Caco-2 (cell line): ENCODE measurements at regions of chr15 and their contacts with region 1.

Region 1: DNA sequence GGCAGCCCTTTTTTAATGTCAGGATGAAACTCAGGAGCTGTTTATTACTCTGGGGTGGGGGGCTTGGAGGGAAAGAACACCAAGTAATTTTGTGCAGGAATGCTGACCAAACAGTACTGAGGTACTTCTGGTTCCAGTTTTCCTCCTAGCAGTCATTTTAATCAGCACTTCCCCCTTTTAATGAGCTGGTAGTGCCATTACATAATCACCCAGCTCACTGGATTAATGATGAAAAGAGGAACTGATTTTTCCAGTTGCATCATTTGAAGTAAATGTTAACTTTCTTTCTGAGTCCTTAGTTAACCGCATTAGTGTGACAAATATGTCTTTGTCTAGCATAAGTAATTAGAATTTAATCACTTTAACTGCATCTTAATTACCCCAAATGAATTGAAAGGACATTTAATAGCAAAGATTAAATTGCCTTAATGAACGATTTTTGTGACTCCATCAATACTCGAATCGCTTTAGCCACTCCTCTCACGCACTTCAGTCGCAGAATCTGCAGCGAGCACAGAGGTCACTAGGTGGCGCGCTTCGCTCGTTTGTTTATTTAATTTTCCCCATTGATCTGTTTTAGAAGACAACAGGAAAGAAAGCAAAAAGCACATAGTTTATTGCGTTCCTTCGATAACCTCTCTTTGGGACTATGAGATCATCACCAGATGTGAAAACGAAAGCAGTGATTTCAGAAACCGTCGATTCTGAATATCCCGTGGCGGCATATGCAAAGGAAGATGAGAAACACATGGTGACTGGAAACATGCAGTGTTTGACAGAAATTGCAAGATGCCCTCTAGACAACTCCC is 9.8 kb downstream of the ONECUT1 start:
- DNase-seq: peak in 1 of 2 experiments; percentile 65
- H3K4me3 ChIP-seq: no peak overlapping the region
- H3K4me3 Mint-ChIP-seq: no peak overlapping the region
- H3K27ac Mint-ChIP-seq: no peak overlapping the region
- H3K4me1 ChIP-seq: no peaks in the 10 kb centered on the region
- H3K4me1 Mint-ChIP-seq: no peaks in the 10 kb centered on the region
- H3K27me3 ChIP-seq: no peaks in the 10 kb centered on the region
- H3K27me3 Mint-ChIP-seq: peaks cover 9% of the 10 kb centered on the region
- CTCF ChIP-seq: peak; percentile 84 to 91

Region 2: GRCh38 chr15:52679232-52680040 is 100.9 kb before region 1 on chr15 and contains the start of gene ATOSA:
- CTCF ChIA-PET with region 1: no interaction called
- POLR2A ChIA-PET with region 1: no interaction called
- intact Hi-C with region 1: no loop called
- DNase-seq: peak; percentile 88 to 94
- H3K4me3 ChIP-seq: peak within 1 kb of the TSS; percentile 92
- H3K4me3 Mint-ChIP-seq: peak within 1 kb of the TSS; percentile 92
- H3K27ac Mint-ChIP-seq: peak within 1 kb of the TSS; percentile 89
- H3K4me1 ChIP-seq: peaks cover 9% of the 10 kb centered on the region
- H3K4me1 Mint-ChIP-seq: no peaks in the 10 kb centered on the region
- H3K27me3 ChIP-seq: no peaks in the 10 kb centered on the region
- H3K27me3 Mint-ChIP-seq: peaks cover 5% of the 10 kb centered on the region
- CTCF ChIP-seq: peak in 1 of 2 experiments; percentile 18
- total RNA-seq, gene ATOSA: 17.6 and 18.4 TPM in 2 replicates

Region 3: GRCh38 chr15:52879904-52880303 is 99.5 kb after region 1 on chr15:
- CTCF ChIA-PET with region 1: no interaction called
- POLR2A ChIA-PET with region 1: no interaction called
- intact Hi-C with region 1: loop called (anchors 10 kb)
- DNase-seq: no peak
- H3K4me3 ChIP-seq: no peak overlapping the region
- H3K4me3 Mint-ChIP-seq: no peak overlapping the region
- H3K27ac Mint-ChIP-seq: no peak overlapping the region
- H3K4me1 ChIP-seq: no peaks in the 10 kb centered on the region
- H3K4me1 Mint-ChIP-seq: no peaks in the 10 kb centered on the region
- H3K27me3 ChIP-seq: no peaks in the 10 kb centered on the region; the same call in 1 of the 2 replicates
- H3K27me3 Mint-ChIP-seq: peaks cover 10% of the 10 kb centered on the region
- CTCF ChIP-seq: no peak

Region 4: DNA sequence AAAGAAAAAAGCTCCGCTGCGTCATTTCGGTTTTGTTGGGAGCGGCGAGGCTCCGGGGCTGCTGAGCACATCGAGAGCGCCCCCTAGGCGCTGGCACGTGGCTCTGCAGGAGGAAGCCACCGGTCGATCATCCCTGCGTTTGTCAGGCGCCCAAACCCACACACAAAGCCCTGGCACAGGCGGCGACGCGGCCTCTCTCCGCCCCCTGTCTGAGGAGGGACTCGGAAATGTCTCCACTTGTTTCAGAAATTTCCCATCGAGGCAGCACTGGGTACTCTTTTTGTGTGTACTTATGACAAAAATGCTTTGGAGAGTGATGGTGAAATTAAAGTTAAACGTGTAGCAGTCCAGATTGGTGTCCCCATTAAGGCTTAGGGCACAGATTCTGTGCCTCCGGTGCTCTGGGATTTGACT is 417.1 kb after region 1 on chr15:
- CTCF ChIA-PET with region 1: interaction called, 3 read pairs
- POLR2A ChIA-PET with region 1: no interaction called
- intact Hi-C with region 1: loop called (anchors 2 kb)
- DNase-seq: peak; percentile 41 to 60
- H3K4me3 ChIP-seq: no peak overlapping the region
- H3K4me3 Mint-ChIP-seq: no peak overlapping the region
- H3K27ac Mint-ChIP-seq: no peak overlapping the region
- H3K4me1 ChIP-seq: no peaks in the 10 kb centered on the region
- H3K4me1 Mint-ChIP-seq: no peaks in the 10 kb centered on the region
- H3K27me3 ChIP-seq: no peaks in the 10 kb centered on the region
- H3K27me3 Mint-ChIP-seq: peaks cover 10% of the 10 kb centered on the region
- CTCF ChIP-seq: peak; percentile 89

Region 5: DNA sequence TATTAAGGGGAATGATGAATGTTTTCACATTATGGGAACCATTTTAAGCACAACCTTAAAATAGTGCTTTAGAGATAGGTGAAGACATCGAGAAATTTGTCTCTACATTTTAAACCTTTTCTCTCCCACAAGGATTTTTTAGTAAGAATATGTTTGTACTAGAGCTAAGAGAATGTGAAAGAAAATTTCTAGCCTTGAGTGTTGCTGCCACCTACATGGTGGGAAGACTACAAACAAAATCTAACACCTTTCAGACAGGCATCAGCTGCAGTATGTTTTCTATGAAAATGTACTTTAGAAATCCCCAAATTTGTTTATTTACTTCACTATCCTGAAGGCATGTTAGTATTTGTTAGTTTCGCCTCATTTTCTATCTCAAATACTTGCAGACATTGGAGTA is 731.7 kb after region 1 on chr15:
- CTCF ChIA-PET with region 1: no interaction called
- POLR2A ChIA-PET with region 1: no interaction called
- intact Hi-C with region 1: loop called (anchors 1 kb)
- DNase-seq: no peak
- H3K4me3 ChIP-seq: no peak overlapping the region
- H3K4me3 Mint-ChIP-seq: no peak overlapping the region
- H3K27ac Mint-ChIP-seq: no peak overlapping the region
- H3K4me1 ChIP-seq: no peaks in the 10 kb centered on the region
- H3K4me1 Mint-ChIP-seq: no peaks in the 10 kb centered on the region
- H3K27me3 ChIP-seq: no peaks in the 10 kb centered on the region
- H3K27me3 Mint-ChIP-seq: no peaks in the 10 kb centered on the region
- CTCF ChIP-seq: peak; percentile 27 to 38

Region 6: GRCh38 chr15:53716909-53717876 is 936.8 kb after region 1 on chr15:
- CTCF ChIA-PET with region 1: no interaction called
- POLR2A ChIA-PET with region 1: no interaction called
- intact Hi-C with region 1: loop called (anchors 1 kb)
- DNase-seq: peak in 1 of 2 experiments; percentile 4
- H3K4me3 ChIP-seq: no peak overlapping the region
- H3K4me3 Mint-ChIP-seq: no peak overlapping the region
- H3K27ac Mint-ChIP-seq: no peak overlapping the region
- H3K4me1 ChIP-seq: no peaks in the 10 kb centered on the region
- H3K4me1 Mint-ChIP-seq: no peaks in the 10 kb centered on the region
- H3K27me3 ChIP-seq: no peaks in the 10 kb centered on the region; the same call in 1 of the 2 replicates
- H3K27me3 Mint-ChIP-seq: peaks cover 8% of the 10 kb centered on the region
- CTCF ChIP-seq: peak; percentile 30 to 42